Naive thymus-derived CD8-positive, alpha-beta T cell (primary cell): ENCODE measurements at regions of chr20 and their contacts with region 1.

Region 1: DNA sequence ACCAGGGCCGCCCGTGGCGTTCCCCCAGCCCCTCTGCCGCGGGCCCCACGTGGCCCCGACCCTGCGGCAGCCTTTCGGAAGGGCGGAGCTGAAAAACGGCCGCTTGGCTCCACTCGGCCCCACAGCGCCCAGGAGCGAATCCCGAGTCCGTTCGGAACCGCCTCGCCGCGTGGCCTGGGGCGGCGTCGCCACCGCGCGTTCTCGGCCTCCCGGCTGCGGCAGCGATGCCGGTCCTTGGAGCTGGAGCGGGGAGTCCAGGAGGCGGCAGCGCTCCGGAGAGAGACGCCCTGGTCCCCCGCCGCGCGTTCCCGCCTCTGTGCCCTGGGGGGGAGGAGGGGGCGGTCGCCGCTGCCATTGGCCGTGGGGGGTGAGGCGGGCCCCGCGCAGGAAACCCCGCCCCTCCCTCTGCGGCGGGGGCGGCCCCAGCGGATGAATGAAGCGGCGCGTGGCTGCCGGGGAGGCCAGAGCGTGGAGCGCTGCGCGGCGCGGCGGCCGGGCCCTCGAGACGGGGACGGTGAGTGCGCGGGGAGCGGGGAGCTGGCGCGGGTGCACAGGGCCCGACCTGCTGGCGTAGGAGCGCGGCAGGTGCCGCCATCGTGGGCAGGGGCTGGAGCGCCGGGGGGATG is at the start of gene SLCO4A1:
- DNase-seq: peak; percentile 70 to 87 (median 82)
- ATAC-seq: peak; percentile 89
- H3K4me3 Mint-ChIP-seq: peak within 1 kb of the TSS; percentile 73 to 90 (median 79)
- H3K27ac Mint-ChIP-seq: peak within 1 kb of the TSS in 3 of 10 donors; percentile 71 to 87 (median 82)
- H3K4me1 Mint-ChIP-seq: peaks cover 10 to 26% (median 14%) of the 10 kb centered on the region in 4 donors
- H3K27me3 Mint-ChIP-seq: peaks cover 0 to 5% (median 0%) of the 10 kb centered on the region in 5 donors
- polyA plus RNA-seq, gene SLCO4A1: 0.93 TPM in 1 of 3 donors, not detected in the others

Region 2: GRCh38 chr20:62652051-62652926 is 10.1 kb after region 1 on chr20:
- POLR2A ChIA-PET with region 1: interaction called, 30 read pairs
- DNase-seq: peak in 9 of 10 donors; percentile 52 to 89 (median 75)
- ATAC-seq: peak; percentile 56 to 72
- H3K4me3 Mint-ChIP-seq: peak overlapping the region; percentile 75 to 91 (median 85)
- H3K27ac Mint-ChIP-seq: peak overlapping the region; percentile 90 to 99 (median 98)
- H3K4me1 Mint-ChIP-seq: peaks cover 8 to 35% (median 26%) of the 10 kb centered on the region in 4 donors
- H3K27me3 Mint-ChIP-seq: no peaks in the 10 kb centered on the region